ENCODE measurements at regions of chr3 and their contacts with region 1.

Region 1: GRCh38 chr3:196942226-196942914 is at the start of gene NCBP2:
- DNase-seq: peak; percentile 100
- H3K4me3 Mint-ChIP-seq: peak within 1 kb of the TSS; percentile 98
- H3K27ac Mint-ChIP-seq: peak within 1 kb of the TSS; percentile 92
- H3K4me1 Mint-ChIP-seq: peaks cover 38% of the 10 kb centered on the region
- H3K27me3 Mint-ChIP-seq: peaks cover 2% of the 10 kb centered on the region
- total RNA-seq, gene NCBP2: 83.0 to 85.1 TPM

Region 2: GRCh38 chr3:195909644-195910508 is 1032.5 kb before region 1 on chr3:
- CTCF ChIA-PET with region 1: no interaction called
- POLR2A ChIA-PET with region 1: no interaction called
- intact Hi-C with region 1: loop called (anchors 10 kb)
- DNase-seq: peak; percentile 91
- H3K4me3 Mint-ChIP-seq: peak overlapping the region; percentile 66
- H3K27ac Mint-ChIP-seq: peak overlapping the region; percentile 54
- H3K4me1 Mint-ChIP-seq: peaks cover 28% of the 10 kb centered on the region
- H3K27me3 Mint-ChIP-seq: no peaks in the 10 kb centered on the region

Region 3: DNA sequence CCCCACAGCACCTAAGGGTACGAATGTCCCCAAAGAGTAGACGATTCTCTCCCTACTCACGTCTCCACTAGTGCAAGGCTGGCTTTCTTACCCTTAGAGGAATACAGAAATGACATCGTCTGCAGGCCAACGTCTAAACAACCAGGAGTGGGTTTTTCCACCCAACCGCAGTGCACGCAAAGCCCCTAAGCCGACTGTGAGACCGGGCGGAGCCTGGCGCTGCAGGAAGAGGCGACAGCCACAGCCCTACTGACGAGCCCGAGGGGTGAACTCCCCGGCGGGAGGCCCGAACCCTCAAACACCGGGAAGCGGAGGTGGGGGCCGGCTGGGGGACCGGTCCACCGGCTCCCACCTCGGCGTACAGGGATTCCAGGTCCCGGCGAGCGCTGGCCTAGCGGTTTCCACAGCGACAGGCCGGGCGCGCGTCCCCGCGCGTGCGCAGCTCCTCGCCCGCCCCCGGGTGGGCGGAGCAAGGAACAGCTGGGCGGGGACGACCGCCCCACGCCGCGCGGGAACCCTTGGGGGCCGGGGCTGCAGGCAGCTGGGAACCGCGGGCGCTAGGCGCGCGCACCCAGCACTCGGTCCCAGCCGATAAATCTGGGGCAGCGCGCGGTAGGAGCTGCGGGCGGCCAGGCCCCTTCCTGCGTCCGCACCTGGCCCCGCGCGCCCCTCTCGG is 230.4 kb before region 1 on chr3 and contains the starts of genes CEP19 and PIGX:
- CTCF ChIA-PET with region 1: no interaction called
- POLR2A ChIA-PET with region 1: interaction called, 3 read pairs
- intact Hi-C with region 1: loop called (anchors 1 kb)
- DNase-seq: peak; percentile 95
- H3K4me3 Mint-ChIP-seq: peak within 1 kb of the TSS; percentile 81
- H3K27ac Mint-ChIP-seq: peak within 1 kb of the TSS; percentile 94
- H3K4me1 Mint-ChIP-seq: peaks cover 27% of the 10 kb centered on the region
- H3K27me3 Mint-ChIP-seq: no peaks in the 10 kb centered on the region
- total RNA-seq, gene CEP19: 6.5 to 6.6 TPM
- total RNA-seq, gene PIGX: 47.5 to 49.2 TPM

Region 4: DNA sequence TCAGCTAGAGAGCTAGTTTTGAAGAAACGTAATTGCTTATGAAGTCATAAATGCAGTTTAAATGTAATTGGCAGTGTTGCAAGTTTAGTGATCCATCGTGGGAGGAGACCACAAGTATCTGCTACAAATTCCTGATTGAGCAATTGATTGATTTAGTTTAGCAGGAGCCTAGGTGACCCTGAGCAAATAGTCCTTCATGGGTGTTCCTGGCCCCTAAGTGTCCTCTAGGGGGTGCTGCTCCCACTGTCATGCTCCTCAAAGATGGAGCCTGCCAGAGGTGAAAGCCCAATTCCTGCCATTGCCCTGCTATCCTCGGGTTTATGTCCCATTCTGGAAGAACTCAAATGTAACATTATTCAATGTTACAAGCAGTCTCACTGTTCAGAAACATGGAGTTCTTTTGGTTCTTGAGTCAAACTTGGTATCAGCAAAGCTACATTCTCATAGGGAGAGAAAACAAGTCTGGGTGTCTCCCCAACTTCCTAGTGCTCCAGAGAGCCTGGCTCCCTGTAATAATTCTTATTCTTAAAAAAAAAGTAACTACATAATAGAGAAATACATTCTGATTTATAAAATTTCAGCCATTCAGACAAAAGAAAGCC is 104.5 kb before region 1 on chr3:
- CTCF ChIA-PET with region 1: interaction called, 10 read pairs
- POLR2A ChIA-PET with region 1: interaction called, 5 read pairs
- intact Hi-C with region 1: loop called (anchors 1 kb)
- DNase-seq: peak; percentile 85
- H3K4me3 Mint-ChIP-seq: no peak overlapping the region
- H3K27ac Mint-ChIP-seq: no peak overlapping the region
- H3K4me1 Mint-ChIP-seq: no peaks in the 10 kb centered on the region
- H3K27me3 Mint-ChIP-seq: no peaks in the 10 kb centered on the region

Region 5: DNA sequence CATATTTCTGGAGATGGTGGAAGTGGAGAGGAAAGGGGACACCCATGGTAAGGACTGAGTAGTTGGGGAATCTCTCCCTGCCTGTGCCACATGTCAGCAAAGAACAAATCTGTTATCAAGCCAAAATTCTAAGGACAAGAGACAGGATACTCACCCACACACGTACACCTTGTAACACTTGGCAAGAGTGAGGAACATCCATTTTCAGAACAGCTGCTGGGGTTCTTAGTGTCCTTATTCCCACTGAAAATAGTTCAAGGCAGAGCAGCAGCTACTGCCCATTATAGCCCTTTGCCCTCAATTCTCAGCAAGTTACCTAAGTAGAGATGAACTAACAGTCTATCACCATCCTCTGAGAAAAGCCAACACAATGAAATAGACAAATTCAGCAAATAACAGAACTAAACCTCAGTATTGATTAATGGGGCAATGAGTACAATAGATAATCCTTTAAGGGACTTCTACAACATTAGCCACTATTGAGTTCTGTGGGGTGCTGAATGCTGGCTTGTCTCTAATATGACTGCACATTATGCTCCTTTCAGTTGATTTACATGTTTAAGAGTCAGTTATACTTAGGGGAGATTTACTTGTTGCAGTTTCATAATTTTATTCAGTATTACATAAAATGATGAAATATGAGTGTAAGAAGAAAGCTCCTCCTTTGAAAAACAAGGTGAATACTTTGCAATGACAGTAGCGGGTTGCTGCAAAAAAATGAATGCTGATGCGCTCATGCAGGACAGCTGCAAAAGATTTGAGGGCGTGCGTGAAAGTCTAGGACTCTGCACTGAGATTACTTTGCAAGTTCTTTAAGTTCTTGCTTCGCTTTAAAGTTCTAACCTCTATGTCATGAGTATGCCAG is 52.3 kb before region 1 on chr3:
- CTCF ChIA-PET with region 1: no interaction called
- POLR2A ChIA-PET with region 1: no interaction called
- intact Hi-C with region 1: loop called (anchors 5 kb)
- DNase-seq: no peak
- H3K4me3 Mint-ChIP-seq: no peak overlapping the region
- H3K27ac Mint-ChIP-seq: no peak overlapping the region
- H3K4me1 Mint-ChIP-seq: peaks cover 41% of the 10 kb centered on the region
- H3K27me3 Mint-ChIP-seq: no peaks in the 10 kb centered on the region

Region 6: GRCh38 chr3:197298341-197298857 is 356.0 kb after region 1 on chr3 and contains the start of gene DLG1:
- CTCF ChIA-PET with region 1: no interaction called
- POLR2A ChIA-PET with region 1: no interaction called
- intact Hi-C with region 1: loop called (anchors 5 kb)
- DNase-seq: peak; percentile 91
- H3K4me3 Mint-ChIP-seq: peak within 1 kb of the TSS; percentile 97
- H3K27ac Mint-ChIP-seq: peak within 1 kb of the TSS; percentile 89
- H3K4me1 Mint-ChIP-seq: peaks cover 23% of the 10 kb centered on the region
- H3K27me3 Mint-ChIP-seq: peaks cover 24% of the 10 kb centered on the region
- total RNA-seq, gene DLG1: 52.6 to 53.3 TPM

Measured in activated CD4-positive, alpha-beta memory T cell treated with anti-CD3 and anti-CD28 coated beads for 36 hours (primary cell).